Adrenal gland (tissue), 19 donors: ENCODE measurements at regions of chr2 and their contacts with region 1.

Region 1: GRCh38 chr2:112433932-112434730 is 686 bp upstream of the RGPD8 start:
- DNase-seq: peak in 2 of 7 donors; percentile 7 to 55
- H3K4me3 ChIP-seq: no peak overlapping the region
- H3K27ac ChIP-seq: no peak overlapping the region
- H3K4me1 ChIP-seq: peaks cover 0 to 10% of the 10 kb centered on the region in 2 donors
- H3K27me3 ChIP-seq: no peaks in the 10 kb centered on the region
- CTCF ChIP-seq: no peak
- POLR2A ChIP-seq: no peak

Region 2: GRCh38 chr2:112121682-112122254 is 312.4 kb before region 1 on chr2:
- intact Hi-C with region 1: loop called in 1 of 2 experiments (anchors 5 kb)
- DNase-seq: peak in 4 of 7 donors; percentile 29 to 57 (median 46)
- H3K4me3 ChIP-seq: no peak overlapping the region
- H3K27ac ChIP-seq: no peak overlapping the region
- H3K4me1 ChIP-seq: no peaks in the 10 kb centered on the region
- H3K27me3 ChIP-seq: no peaks in the 10 kb centered on the region
- CTCF ChIP-seq: peak; percentile 27 to 68 (median 56)
- POLR2A ChIP-seq: no peak

Region 3: GRCh38 chr2:112254466-112255239 is 179.5 kb before region 1 on chr2 and contains the start of gene ZC3H8:
- intact Hi-C with region 1: loop called in 1 of 2 experiments (anchors 5 kb)
- DNase-seq: peak; percentile 93 to 97 (median 95)
- H3K4me3 ChIP-seq: peak within 1 kb of the TSS in 3 of 4 donors; percentile 64 to 68 (median 67)
- H3K27ac ChIP-seq: peak within 1 kb of the TSS; percentile 65 to 90 (median 73)
- H3K4me1 ChIP-seq: peaks cover 0 to 21% of the 10 kb centered on the region in 2 donors
- H3K27me3 ChIP-seq: no peaks in the 10 kb centered on the region
- CTCF ChIP-seq: peak in 1 of 6 experiments; percentile 2
- POLR2A ChIP-seq: peak; percentile 72 to 89
- total RNA-seq, gene ZC3H8: 0.85 to 16.5 (median 8.2) TPM

Region 4: DNA sequence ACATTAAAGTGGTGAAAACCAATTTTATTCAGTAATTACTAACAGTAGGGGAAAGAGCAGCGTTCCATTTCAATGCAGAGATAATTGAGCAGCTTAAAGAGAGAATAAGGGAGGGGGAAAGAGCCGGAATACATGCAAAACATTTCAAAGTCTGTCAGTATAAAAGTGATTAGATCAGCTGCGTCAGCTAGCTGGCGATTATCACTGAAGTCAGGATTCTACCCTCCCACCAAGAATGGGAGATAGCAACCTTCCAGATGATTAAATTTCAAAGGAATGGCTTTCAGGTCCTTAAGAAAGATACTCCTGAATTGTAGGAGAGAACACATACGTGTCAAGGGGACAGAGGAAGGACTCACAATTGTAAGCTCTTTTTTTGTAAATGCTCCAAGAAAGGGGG is 161.5 kb before region 1 on chr2:
- intact Hi-C with region 1: loop called in 1 of 2 experiments (anchors 5 kb)
- DNase-seq: peak in 1 of 7 donors; percentile 35
- H3K4me3 ChIP-seq: peak overlapping the region in 1 of 4 donors; percentile 42
- H3K27ac ChIP-seq: peak overlapping the region; percentile 44 to 86 (median 80)
- H3K4me1 ChIP-seq: peaks cover 3 to 18% of the 10 kb centered on the region in 2 donors
- H3K27me3 ChIP-seq: no peaks in the 10 kb centered on the region
- CTCF ChIP-seq: no peak
- POLR2A ChIP-seq: peak in 1 of 2 donors; percentile 2

Region 5: GRCh38 chr2:112290088-112290487 is 144.0 kb before region 1 on chr2:
- intact Hi-C with region 1: no loop called
- DNase-seq: no peak
- H3K4me3 ChIP-seq: no peak overlapping the region
- H3K27ac ChIP-seq: no peak overlapping the region
- H3K4me1 ChIP-seq: peaks cover 0 to 6% of the 10 kb centered on the region in 2 donors
- H3K27me3 ChIP-seq: no peaks in the 10 kb centered on the region
- CTCF ChIP-seq: no peak
- POLR2A ChIP-seq: no peak

Region 6: GRCh38 chr2:112601751-112602150 is 167.6 kb after region 1 on chr2:
- intact Hi-C with region 1: no loop called
- DNase-seq: peak in 1 of 7 donors; percentile 18
- H3K4me3 ChIP-seq: no peak overlapping the region
- H3K27ac ChIP-seq: no peak overlapping the region
- H3K4me1 ChIP-seq: no peaks in the 10 kb centered on the region
- H3K27me3 ChIP-seq: no peaks in the 10 kb centered on the region
- CTCF ChIP-seq: no peak
- POLR2A ChIP-seq: no peak